Panc1 (cell line): ENCODE measurements at regions of chr12 and their contacts with region 1.

Region 1: DNA sequence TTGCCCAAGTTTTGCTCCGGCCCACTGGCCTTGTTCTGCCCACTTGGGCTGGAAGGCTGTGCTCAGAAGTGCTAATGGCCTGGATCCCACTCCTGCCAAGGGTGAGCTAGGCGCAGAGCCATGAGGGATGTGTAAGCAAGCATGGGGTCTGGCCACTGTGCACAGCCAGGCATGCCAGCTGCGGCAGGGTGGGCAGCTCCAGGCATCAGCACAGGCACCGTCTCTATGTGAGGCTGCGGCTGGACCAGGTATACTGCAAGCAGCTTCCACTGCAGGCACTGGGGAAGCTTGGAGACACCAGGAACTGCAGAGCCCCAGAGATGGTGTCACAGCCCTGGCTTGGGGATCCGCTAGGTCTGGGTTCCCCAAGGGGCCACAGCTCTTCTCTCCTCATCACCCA is 264.9 kb downstream of the LRIG3 start:
- DNase-seq: no peak
- ATAC-seq: no peak
- H3K4me3 ChIP-seq: no peak overlapping the region
- H3K27ac ChIP-seq: no peak overlapping the region
- H3K4me1 ChIP-seq: no peaks in the 10 kb centered on the region
- H3K27me3 ChIP-seq: no peaks in the 10 kb centered on the region
- CTCF ChIP-seq: no peak

Region 2: GRCh38 chr12:58678753-58679152 is 23.4 kb after region 1 on chr12:
- CTCF ChIA-PET with region 1: no interaction called
- POLR2A ChIA-PET with region 1: interaction called, 11 read pairs
- in situ Hi-C with region 1: no loop called
- intact Hi-C with region 1: no loop called
- DNase-seq: no peak
- ATAC-seq: no peak
- H3K4me3 ChIP-seq: no peak overlapping the region
- H3K27ac ChIP-seq: no peak overlapping the region
- H3K4me1 ChIP-seq: no peaks in the 10 kb centered on the region
- H3K27me3 ChIP-seq: no peaks in the 10 kb centered on the region
- CTCF ChIP-seq: no peak